ENCODE measurements at regions of chr7 and their contacts with region 1.

Region 1: DNA sequence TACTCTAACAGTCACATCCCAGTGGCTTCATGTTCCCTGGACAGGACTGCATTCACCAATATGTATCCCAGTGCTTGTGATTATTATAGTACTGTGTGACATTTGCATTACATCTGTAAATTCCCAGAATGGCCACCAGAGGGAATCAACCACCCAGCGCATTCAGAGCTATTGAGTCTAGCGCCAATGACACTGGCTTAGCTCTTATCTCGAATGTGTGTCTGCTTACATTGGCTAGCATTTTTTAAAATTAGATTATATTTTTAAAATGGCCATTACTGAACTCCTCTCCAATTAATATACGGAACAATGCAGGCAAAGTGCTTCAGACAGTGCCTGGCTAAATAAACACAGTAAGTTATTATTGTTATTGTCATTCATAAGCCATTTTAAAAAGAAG is 36.3 kb downstream of the TRIL start:
- DNase-seq: peak; percentile 55
- ATAC-seq: peak; percentile 91
- H3K4me3 Mint-ChIP-seq: no peak overlapping the region
- H3K27ac Mint-ChIP-seq: no peak overlapping the region
- H3K4me1 Mint-ChIP-seq: peaks cover 15% of the 10 kb centered on the region
- H3K27me3 Mint-ChIP-seq: peaks cover 14% of the 10 kb centered on the region

Region 2: DNA sequence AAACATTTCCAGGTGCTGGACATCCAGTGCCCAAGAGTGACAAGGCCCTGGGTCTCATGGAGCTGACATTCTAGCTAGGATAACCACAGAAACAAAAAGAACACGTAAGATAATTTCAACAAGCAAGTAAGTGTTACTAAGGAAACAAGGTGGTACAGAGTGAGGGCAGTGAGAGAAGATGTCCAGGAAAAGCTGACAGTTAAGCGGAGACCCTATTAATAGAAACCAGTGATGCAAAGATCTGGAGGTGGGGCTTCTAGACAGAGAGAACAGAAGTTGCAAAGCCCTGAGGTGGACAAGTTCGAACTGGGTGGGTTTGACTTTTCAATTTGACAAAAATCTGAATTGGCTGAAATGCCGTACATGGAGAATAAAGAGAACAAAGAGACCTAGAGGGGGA is 60.0 kb before region 1 on chr7:
- CTCF ChIA-PET with region 1: no interaction called
- POLR2A ChIA-PET with region 1: no interaction called
- DNase-seq: no peak
- ATAC-seq: no peak
- H3K4me3 Mint-ChIP-seq: no peak overlapping the region
- H3K27ac Mint-ChIP-seq: no peak overlapping the region
- H3K4me1 Mint-ChIP-seq: no peaks in the 10 kb centered on the region
- H3K27me3 Mint-ChIP-seq: peaks cover 16% of the 10 kb centered on the region

Region 3: DNA sequence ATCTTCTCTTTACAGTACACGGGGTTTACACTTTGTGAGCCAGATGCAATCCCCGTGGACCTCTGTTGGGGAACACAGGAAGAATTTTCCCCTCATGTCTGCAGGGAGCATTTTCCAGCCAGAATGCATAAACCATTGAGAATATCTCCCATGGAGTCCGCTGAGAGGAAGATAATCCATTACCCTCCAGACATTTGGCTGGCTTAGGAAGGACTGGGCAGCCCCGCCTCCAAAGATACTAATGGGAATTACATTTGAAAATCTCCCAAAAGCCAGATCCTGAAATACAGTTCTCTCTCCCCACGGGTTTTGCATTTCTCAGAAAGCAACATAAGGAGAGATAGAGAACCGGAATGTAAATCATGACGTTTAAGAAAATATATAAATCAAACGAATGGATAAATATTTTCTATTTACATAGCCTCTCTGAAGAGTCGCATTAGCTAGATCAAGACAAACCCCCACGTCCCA is 17.2 kb before region 1 on chr7:
- CTCF ChIA-PET with region 1: interaction called, 21 read pairs
- POLR2A ChIA-PET with region 1: no interaction called
- DNase-seq: no peak
- ATAC-seq: no peak
- H3K4me3 Mint-ChIP-seq: no peak overlapping the region
- H3K27ac Mint-ChIP-seq: no peak overlapping the region
- H3K4me1 Mint-ChIP-seq: no peaks in the 10 kb centered on the region
- H3K27me3 Mint-ChIP-seq: peaks cover 4% of the 10 kb centered on the region

Region 4: DNA sequence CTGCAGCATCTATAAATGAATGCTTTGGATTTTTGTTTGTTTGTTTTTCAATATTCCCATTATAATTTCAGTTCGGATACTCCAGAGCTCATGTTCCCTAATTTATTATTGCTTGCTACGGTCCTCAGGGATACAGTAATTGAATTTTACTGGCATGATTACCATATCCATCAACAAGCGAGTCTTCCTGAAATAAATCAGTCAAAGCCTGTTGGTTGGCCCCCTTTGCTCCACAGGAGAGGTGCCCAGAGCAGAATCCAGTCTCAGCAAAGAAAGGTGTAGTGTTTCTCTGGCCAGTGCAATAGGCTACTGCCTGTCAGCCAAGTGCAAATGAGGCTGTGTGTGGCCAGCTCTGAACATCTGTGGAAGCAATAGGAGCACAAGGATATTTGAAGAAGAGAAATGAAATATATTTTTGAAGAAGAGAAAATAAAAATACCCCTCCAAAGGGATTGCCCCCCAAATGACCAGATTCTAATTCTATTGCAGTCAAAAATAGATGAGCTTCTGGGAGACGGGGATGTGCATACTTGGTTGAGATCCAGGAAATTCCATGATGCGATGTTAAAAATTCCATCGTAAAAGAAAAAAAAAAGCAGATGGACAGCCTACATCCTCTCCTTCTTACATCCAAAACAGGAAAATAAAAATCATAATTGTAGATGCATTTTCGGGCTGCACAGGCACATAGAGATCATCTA is 18.2 kb after region 1 on chr7:
- CTCF ChIA-PET with region 1: interaction called, 12 read pairs
- POLR2A ChIA-PET with region 1: interaction called, 3 read pairs
- DNase-seq: no peak
- ATAC-seq: no peak
- H3K4me3 Mint-ChIP-seq: no peak overlapping the region
- H3K27ac Mint-ChIP-seq: no peak overlapping the region
- H3K4me1 Mint-ChIP-seq: no peaks in the 10 kb centered on the region
- H3K27me3 Mint-ChIP-seq: peaks cover 4% of the 10 kb centered on the region

Region 5: DNA sequence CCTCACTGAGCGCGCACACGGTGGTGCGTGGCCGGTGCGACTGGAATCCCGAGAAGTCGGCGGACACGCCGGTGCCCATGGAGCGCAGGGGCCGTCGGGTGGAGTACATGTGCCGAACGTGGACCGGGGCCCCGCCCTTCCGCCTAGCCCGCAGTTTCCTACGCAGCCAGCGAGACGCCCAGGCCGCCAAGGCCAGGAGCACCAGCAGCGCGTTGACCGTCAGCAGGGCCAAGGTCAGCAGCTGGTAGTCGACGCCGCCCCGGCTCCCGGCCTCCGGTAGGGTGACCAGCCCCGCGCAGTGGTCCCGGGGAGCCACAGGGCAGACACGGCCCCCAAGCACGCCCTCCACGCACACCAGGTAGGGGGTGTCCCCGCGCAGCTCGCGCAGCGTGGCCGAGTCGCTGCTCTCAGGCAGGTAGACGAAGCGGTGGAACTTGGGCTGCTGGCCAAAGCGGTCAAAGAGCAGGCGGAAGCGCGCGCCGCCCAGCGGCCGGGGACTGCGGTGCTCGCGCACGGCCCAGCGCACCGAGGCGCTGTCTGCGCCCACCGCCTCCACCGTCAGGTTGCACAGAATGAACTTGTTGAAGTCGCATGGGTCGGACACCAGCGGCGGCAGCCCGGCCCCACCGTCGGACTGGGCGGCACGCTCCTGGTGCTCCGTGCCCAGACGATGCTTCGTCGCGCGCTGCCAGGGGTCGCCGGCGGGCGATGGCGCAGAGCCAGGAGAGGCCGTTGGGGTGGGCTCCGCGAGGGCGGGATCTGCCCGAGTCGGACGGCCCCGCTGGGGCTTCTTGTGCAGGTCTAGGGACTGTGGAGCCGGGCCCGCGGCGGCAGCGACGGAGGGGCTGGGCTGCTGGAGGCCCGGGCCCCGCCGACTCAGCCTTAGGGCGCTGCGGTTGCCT is 34.1 kb after region 1 on chr7:
- CTCF ChIA-PET with region 1: interaction called, 22 read pairs
- POLR2A ChIA-PET with region 1: no interaction called
- DNase-seq: peak; percentile 33
- ATAC-seq: peak; percentile 43
- H3K4me3 Mint-ChIP-seq: no peak overlapping the region
- H3K27ac Mint-ChIP-seq: no peak overlapping the region
- H3K4me1 Mint-ChIP-seq: peaks cover 18% of the 10 kb centered on the region
- H3K27me3 Mint-ChIP-seq: peaks cover 73% of the 10 kb centered on the region

Region 6: GRCh38 chr7:29091715-29092114 is 169.9 kb after region 1 on chr7:
- CTCF ChIA-PET with region 1: interaction called, 279 read pairs
- POLR2A ChIA-PET with region 1: no interaction called
- DNase-seq: no peak
- ATAC-seq: peak; percentile 73
- H3K4me3 Mint-ChIP-seq: peak overlapping the region; percentile 69
- H3K27ac Mint-ChIP-seq: peak overlapping the region; percentile 74
- H3K4me1 Mint-ChIP-seq: peaks cover 21% of the 10 kb centered on the region
- H3K27me3 Mint-ChIP-seq: peaks cover 4% of the 10 kb centered on the region

Region 7: DNA sequence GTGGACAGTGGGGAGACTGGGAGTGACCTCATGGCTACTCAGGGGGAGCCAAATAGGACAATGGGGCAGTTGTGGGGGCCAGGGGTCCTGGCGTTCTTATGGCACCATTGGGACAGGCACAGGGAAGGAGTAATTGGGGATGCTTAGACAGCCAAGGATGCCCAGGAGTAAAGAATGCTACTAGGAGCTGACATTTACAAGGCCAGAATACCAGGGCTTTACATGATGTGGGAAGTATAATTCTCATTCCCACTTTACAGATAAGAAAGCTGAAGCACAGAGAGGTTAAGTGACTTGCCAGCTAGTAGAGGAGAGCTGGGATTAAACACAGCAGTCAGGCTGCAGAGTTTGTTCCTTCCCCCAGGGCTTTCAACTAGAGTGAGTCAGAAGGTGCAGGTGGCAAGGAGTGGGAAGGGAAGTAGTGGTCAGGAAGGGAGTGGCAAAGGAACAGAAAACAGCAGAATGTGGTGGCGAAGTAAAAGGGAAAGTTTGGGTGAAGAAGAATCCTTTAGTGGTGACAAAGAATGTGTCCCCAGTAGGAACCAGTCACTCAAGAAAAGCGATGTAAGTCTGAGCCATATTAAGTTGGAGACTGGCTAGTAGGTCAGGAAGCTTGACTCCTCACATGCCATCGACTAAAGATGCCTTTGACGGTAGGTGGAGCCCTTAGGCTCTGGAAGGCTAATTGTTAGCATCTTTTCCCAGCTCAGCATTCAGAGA is 191.7 kb after region 1 on chr7:
- CTCF ChIA-PET with region 1: interaction called, 13 read pairs
- POLR2A ChIA-PET with region 1: no interaction called
- DNase-seq: no peak
- ATAC-seq: no peak
- H3K4me3 Mint-ChIP-seq: no peak overlapping the region
- H3K27ac Mint-ChIP-seq: no peak overlapping the region
- H3K4me1 Mint-ChIP-seq: peaks cover 11% of the 10 kb centered on the region
- H3K27me3 Mint-ChIP-seq: peaks cover 32% of the 10 kb centered on the region

Region 8: DNA sequence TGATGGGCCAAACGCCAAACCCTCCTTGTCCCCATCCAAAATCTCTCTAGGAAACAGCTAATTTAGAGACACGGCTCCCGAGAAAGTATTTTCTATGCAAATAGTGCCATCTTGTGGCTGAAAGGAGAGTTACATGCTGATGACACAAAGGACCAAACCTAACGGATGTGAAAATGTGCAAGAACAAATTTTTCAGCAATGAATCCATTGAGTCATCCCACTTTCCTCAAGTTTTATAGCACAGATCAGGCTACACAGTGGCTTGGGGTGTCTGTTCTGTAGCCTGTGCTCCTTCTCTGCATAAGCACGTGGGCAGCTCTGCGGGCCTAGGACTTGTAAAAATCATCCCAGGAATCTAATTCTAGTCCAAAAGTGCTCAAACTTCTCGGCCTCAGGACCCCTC is 487.0 kb after region 1 on chr7:
- CTCF ChIA-PET with region 1: interaction called, 70 read pairs
- POLR2A ChIA-PET with region 1: no interaction called
- DNase-seq: peak; percentile 71
- ATAC-seq: peak; percentile 58
- H3K4me3 Mint-ChIP-seq: no peak overlapping the region
- H3K27ac Mint-ChIP-seq: no peak overlapping the region
- H3K4me1 Mint-ChIP-seq: no peaks in the 10 kb centered on the region
- H3K27me3 Mint-ChIP-seq: no peaks in the 10 kb centered on the region